CD8-positive, alpha-beta T cell (primary cell): ENCODE measurements at regions of chr4 and their contacts with region 1.

Region 1: GRCh38 chr4:89288430-89288829 is 19.2 kb downstream of the GPRIN3 start:
- DNase-seq: no peak
- ATAC-seq: no peak
- H3K4me3 ChIP-seq: no peak overlapping the region
- H3K4me3 Mint-ChIP-seq: peak overlapping the region; percentile 75
- H3K27ac ChIP-seq: peak overlapping the region in 1 of 2 experiments; percentile 55
- H3K27ac Mint-ChIP-seq: peak overlapping the region; percentile 88
- H3K4me1 ChIP-seq: peaks cover 51% of the 10 kb centered on the region
- H3K4me1 Mint-ChIP-seq: peaks cover 93% of the 10 kb centered on the region
- H3K27me3 ChIP-seq: no peaks in the 10 kb centered on the region
- H3K27me3 Mint-ChIP-seq: no peaks in the 10 kb centered on the region
- CTCF ChIP-seq: no peak

Region 2: DNA sequence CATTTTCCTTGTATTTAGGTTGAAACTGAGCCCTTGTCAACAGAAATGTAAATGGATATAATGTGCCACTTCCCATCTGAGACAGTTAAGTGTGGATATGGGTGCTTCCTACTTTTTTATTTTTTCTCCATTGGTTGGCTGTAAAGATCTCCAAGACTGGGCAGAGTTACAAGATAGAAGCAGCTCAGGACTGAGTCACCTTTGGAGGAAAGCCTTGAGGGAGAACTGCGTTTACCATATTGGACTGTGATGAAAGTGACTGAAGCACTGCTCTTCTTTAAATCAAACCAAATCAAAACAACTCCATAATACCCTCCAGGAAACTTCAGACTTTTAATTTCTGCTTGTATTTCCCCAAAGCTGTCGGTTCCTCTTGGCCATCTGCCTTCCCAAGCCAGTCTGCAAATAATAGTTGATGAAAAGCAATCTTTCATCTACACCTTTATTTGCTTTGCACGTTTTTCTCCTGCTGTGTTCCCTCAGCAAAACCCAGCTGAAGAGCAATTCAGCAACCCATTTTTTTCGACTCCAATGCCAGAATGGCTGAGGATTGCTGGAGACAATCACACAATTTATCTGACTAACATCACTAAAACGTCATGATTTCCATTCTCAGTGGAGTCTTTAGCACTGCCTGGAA is 75.2 kb before region 1 on chr4:
- CTCF ChIA-PET with region 1: no interaction called
- POLR2A ChIA-PET with region 1: no interaction called
- intact Hi-C with region 1: no loop called
- DNase-seq: no peak
- ATAC-seq: no peak
- H3K4me3 ChIP-seq: no peak overlapping the region
- H3K4me3 Mint-ChIP-seq: no peak overlapping the region
- H3K27ac ChIP-seq: no peak overlapping the region
- H3K27ac Mint-ChIP-seq: no peak overlapping the region
- H3K4me1 ChIP-seq: no peaks in the 10 kb centered on the region
- H3K4me1 Mint-ChIP-seq: no peaks in the 10 kb centered on the region
- H3K27me3 ChIP-seq: no peaks in the 10 kb centered on the region
- H3K27me3 Mint-ChIP-seq: peaks cover 2% of the 10 kb centered on the region
- CTCF ChIP-seq: no peak

Region 3: GRCh38 chr4:89276296-89276695 is 12.1 kb before region 1 on chr4:
- CTCF ChIA-PET with region 1: interaction called, 3 read pairs
- POLR2A ChIA-PET with region 1: no interaction called
- intact Hi-C with region 1: loop called in 1 of 2 experiments (anchors 1 kb)
- DNase-seq: no peak
- ATAC-seq: no peak
- H3K4me3 ChIP-seq: no peak overlapping the region
- H3K4me3 Mint-ChIP-seq: no peak overlapping the region
- H3K27ac ChIP-seq: peak overlapping the region in 1 of 2 experiments; percentile 5
- H3K27ac Mint-ChIP-seq: no peak overlapping the region
- H3K4me1 ChIP-seq: peaks cover 10% of the 10 kb centered on the region
- H3K4me1 Mint-ChIP-seq: peaks cover 58% of the 10 kb centered on the region
- H3K27me3 ChIP-seq: no peaks in the 10 kb centered on the region
- H3K27me3 Mint-ChIP-seq: no peaks in the 10 kb centered on the region
- CTCF ChIP-seq: no peak

Region 4: DNA sequence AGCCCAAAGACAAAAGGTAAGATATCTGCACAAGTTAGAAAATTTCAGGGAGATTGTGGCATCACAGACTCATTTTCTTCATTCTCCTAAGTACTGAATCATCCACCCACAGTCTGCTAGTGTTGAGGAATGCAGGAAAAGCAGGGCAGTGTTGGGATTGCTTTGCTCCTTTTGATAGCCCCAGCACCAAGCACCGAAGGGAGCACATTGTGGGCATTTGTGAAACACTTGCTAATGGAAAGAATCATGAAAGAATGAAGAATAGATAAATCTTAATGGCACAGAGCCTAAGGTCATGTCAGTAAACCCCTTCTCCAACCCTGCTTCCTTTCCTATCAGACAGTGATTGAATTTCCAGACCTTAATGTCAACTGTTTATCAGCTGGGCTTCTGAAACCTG is 122.3 kb after region 1 on chr4:
- CTCF ChIA-PET with region 1: no interaction called
- POLR2A ChIA-PET with region 1: no interaction called
- intact Hi-C with region 1: no loop called
- DNase-seq: no peak
- ATAC-seq: no peak
- H3K4me3 ChIP-seq: no peak overlapping the region
- H3K4me3 Mint-ChIP-seq: no peak overlapping the region
- H3K27ac ChIP-seq: no peak overlapping the region
- H3K27ac Mint-ChIP-seq: no peak overlapping the region
- H3K4me1 ChIP-seq: no peaks in the 10 kb centered on the region
- H3K4me1 Mint-ChIP-seq: no peaks in the 10 kb centered on the region
- H3K27me3 ChIP-seq: no peaks in the 10 kb centered on the region
- H3K27me3 Mint-ChIP-seq: peaks cover 3% of the 10 kb centered on the region
- CTCF ChIP-seq: no peak